Endothelial cell of umbilical vein (primary cell): ENCODE measurements at regions of chr13 and their contacts with region 1.

Region 1: DNA sequence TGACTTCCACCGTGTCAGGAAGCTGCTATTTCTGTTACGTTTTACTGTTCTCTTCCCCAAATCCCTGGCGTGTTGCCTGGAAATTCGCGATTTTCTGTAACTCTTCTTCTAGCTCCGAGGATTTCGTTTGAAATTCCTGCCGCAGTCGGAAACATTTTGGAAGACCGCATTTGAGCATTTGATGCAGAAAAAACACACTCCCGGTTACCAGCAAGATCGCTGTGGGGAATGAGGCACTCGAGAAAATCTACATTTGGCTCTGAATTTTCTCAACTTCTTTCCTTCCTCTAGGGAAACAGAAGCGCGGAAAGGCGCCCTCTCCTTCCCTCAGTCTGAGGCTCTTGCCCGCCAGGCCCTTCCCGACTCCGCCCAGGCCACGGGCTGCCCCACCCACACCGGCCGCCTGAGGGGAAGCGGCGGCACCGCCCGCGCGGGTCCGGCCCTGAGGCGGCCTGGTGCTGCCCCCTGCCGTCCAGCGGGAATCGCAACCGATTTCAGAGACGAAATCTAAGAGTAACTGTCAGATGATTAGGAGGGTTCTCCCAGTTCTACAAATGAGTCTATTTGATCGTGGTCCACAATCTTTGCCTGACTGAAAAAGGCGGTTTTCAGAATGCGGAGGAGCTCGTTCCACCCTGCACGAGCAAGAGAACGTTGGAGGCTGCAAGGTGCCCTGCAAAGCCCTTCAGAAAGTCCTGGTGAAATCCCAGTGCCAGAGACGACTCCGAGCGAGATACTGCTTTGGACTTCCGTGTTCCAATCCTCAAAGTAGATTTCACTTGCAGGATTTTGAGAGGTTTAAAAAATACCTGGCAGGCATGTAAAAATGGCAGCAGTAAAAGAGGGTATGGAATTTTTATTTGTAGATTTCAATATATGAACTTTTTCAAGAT is 18.4 kb upstream of the TUBGCP3 start:
- DNase-seq: peak; percentile 88
- H3K4me3 ChIP-seq: peak overlapping the region; percentile 40 to 86 (median 55)
- H3K27ac ChIP-seq: peak overlapping the region; percentile 50
- H3K4me1 ChIP-seq: peaks cover 11% of the 10 kb centered on the region
- H3K27me3 ChIP-seq: peaks cover 6 to 9% of the 10 kb centered on the region in 2 experiments
- CTCF ChIP-seq: peak; percentile 77 to 98
- POLR2A ChIP-seq: no peak

Region 2: DNA sequence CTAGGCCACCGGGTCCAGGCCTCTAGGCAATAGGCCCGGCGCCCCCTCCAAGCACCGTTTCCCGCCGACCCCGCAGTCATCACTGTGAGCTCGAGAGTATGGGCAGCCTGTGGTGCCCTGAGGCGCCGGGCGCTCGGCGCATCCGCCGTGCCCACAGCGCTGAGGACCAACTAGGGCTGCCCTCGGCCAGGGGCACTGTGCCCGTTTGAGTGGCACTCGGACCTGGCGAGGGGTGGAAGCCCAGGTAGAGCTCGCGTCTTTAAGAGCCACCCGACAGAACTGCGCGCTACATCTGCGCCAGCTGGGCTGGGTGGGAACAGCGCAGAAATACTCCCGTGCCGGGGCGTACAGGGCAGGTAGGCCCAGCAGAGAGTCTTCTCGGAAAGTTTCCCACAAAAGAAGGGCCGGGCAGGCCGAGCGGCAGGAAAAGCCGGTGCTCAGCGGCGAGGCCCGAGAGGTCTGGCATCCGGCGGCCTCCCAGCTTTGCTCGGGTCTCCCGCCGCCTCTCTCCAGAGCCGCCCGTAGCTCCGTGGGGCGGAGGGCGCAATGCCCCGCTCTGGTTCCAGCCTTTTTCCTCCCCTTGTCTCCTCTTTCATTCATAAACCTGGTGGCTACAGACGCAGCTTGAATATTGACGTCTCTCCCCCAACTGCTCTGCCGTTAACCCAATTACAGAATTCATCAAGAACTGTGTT is 544.8 kb before region 1 on chr13:
- CTCF ChIA-PET with region 1: no interaction called
- POLR2A ChIA-PET with region 1: no interaction called
- dilution Hi-C with region 1: no loop called
- intact Hi-C with region 1: loop called (anchors 1 kb)
- DNase-seq: no peak
- H3K4me3 ChIP-seq: no peak overlapping the region
- H3K27ac ChIP-seq: no peak overlapping the region
- H3K4me1 ChIP-seq: no peaks in the 10 kb centered on the region
- H3K27me3 ChIP-seq: peaks cover 89 to 96% of the 10 kb centered on the region in 2 experiments
- CTCF ChIP-seq: no peak
- POLR2A ChIP-seq: no peak

Region 3: GRCh38 chr13:112333756-112334543 is 272.4 kb before region 1 on chr13:
- CTCF ChIA-PET with region 1: no interaction called
- POLR2A ChIA-PET with region 1: no interaction called
- dilution Hi-C with region 1: no loop called
- intact Hi-C with region 1: loop called (anchors 5 kb)
- DNase-seq: no peak
- H3K4me3 ChIP-seq: no peak overlapping the region
- H3K27ac ChIP-seq: no peak overlapping the region
- H3K4me1 ChIP-seq: no peaks in the 10 kb centered on the region
- H3K27me3 ChIP-seq: peaks cover 0 to 4% of the 10 kb centered on the region in 2 experiments
- CTCF ChIP-seq: no peak
- POLR2A ChIP-seq: no peak

Region 4: DNA sequence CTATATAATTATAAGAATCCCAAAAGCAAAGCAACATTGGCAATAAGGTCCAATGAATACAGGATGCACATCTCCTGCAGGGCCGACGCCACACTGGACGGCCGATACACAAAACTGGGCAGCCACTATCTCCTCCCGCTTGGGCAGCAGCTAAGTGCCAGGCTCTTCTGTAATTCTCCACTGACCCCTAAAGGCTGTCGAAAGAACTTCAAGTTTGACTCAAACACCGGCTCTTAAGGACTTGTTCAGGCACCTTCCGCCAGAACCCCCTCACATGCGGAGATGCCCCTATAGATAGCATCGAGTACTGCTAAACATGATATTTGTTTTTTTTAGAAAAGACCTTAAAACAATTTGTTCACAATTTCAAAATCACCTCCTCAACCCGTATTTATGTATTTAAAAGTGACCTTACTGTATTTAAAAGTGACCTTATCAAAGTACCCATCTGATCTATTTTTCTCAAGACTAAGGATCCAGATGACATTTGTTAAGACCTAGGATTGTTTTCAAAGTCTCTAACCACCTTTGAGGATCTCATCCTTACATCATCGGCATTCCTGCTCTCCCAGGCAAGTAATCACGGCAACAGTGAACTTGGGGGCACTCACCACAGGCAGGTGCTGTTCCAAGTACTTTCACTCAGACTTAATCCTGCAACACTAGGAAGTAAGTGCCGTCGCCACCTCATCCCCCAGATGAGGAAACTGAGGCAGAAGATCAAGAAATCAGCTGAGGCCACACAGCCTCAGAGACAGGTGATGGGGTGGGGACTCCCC is 96.2 kb before region 1 on chr13:
- CTCF ChIA-PET with region 1: interaction called, 10 read pairs
- POLR2A ChIA-PET with region 1: no interaction called
- dilution Hi-C with region 1: no loop called
- intact Hi-C with region 1: loop called (anchors 1 kb)
- DNase-seq: peak; percentile 53
- H3K4me3 ChIP-seq: no peak overlapping the region
- H3K27ac ChIP-seq: no peak overlapping the region
- H3K4me1 ChIP-seq: no peaks in the 10 kb centered on the region
- H3K27me3 ChIP-seq: no peaks in the 10 kb centered on the region
- CTCF ChIP-seq: peak; percentile 29 to 58
- POLR2A ChIP-seq: no peak

Region 5: DNA sequence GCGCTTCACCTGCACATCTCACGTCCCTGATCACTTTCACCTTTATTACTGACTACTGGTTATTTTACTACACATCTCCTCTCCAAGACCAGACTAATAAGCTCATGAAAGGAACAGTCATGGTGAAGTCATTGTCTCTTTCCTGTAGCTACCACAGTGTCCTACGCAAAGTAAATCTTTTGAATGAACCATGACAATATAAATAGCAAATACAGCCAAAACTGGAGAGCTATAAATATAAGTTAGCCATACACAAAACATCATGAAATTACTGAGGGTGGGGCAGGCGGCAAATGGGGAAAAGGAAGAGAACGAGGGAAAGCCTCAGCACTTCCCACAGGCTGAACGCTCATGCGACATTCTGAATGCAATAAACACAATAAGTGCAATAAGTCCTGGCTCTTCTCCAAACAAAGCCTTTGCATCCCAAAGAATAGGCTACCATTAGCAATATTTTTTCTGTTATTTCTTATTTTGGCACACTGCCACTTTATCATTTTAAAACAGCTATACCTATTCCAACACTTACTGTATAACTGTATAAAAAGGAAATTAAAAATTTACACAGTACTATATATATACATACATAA is 80.9 kb before region 1 on chr13:
- CTCF ChIA-PET with region 1: interaction called, 4 read pairs
- POLR2A ChIA-PET with region 1: no interaction called
- dilution Hi-C with region 1: no loop called
- intact Hi-C with region 1: loop called (anchors 5 kb)
- DNase-seq: peak; percentile 28
- H3K4me3 ChIP-seq: no peak overlapping the region
- H3K27ac ChIP-seq: no peak overlapping the region
- H3K4me1 ChIP-seq: peaks cover 8% of the 10 kb centered on the region
- H3K27me3 ChIP-seq: no peaks in the 10 kb centered on the region
- CTCF ChIP-seq: no peak
- POLR2A ChIP-seq: no peak

Region 6: DNA sequence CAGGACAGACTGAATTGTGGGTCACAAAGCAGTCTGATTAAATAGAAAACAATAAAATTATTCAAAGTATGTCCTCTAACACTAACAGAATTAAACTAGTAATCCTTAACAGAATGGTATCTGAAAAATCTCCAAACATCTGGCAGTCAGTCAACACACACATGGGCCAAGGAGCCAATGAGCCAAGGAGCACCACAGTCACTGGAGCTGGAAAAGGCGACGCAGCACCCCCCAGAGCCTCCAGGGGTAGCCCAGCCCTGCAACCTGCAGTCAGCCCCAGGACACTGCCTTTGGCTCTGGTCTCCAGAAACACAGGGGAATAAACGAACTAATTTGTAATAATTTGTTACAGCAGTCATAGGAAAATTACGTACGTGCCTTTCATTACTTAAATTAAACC is 30.7 kb before region 1 on chr13:
- CTCF ChIA-PET with region 1: no interaction called
- POLR2A ChIA-PET with region 1: interaction called, 5 read pairs
- dilution Hi-C with region 1: no loop called
- intact Hi-C with region 1: loop called (anchors 1 kb)
- DNase-seq: peak; percentile 31
- H3K4me3 ChIP-seq: no peak overlapping the region
- H3K27ac ChIP-seq: peak overlapping the region; percentile 89
- H3K4me1 ChIP-seq: peaks cover 35% of the 10 kb centered on the region
- H3K27me3 ChIP-seq: no peaks in the 10 kb centered on the region
- CTCF ChIP-seq: no peak
- POLR2A ChIP-seq: no peak

Region 7: DNA sequence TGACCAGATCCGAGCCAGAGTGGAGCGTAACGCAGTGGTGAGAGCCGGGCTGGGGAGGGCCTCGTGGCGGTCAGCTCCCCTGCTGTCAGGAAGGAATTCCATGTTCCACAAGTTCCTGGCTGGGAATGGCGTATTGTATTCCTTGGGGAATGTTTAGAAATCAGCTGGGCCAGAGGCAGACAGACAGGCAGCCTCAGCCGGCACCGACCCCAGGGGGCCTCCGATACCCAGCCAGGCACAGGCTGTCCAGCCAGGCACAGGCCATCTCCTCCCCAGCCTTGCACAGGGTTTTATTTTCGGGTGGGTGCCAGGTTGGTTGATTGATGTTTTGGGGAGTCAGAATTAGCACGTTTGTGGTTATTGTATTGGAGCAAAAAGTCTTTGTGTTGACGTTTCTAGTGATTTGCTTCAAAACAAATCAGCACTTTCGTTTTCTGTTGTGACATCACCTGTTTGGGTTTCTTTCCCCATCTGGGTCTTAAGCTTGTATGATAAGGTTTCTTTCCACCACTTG is 236.0 kb after region 1 on chr13:
- CTCF ChIA-PET with region 1: no interaction called
- POLR2A ChIA-PET with region 1: no interaction called
- dilution Hi-C with region 1: no loop called
- intact Hi-C with region 1: no loop called
- DNase-seq: peak; percentile 55
- H3K4me3 ChIP-seq: no peak overlapping the region
- H3K27ac ChIP-seq: no peak overlapping the region
- H3K4me1 ChIP-seq: no peaks in the 10 kb centered on the region
- H3K27me3 ChIP-seq: no peaks in the 10 kb centered on the region
- CTCF ChIP-seq: no peak
- POLR2A ChIP-seq: no peak